Activated CD4-positive, alpha-beta T cell treated with anti-CD3 and anti-CD28 coated beads for 36 hours (primary cell): ENCODE measurements at regions of chr17 and their contacts with region 1.

Region 1: GRCh38 chr17:7989781-7990655 is 12.4 kb upstream of the GUCY2D start:
- DNase-seq: peak; percentile 96
- ATAC-seq: peak; percentile 93
- H3K4me3 Mint-ChIP-seq: peak overlapping the region; percentile 73
- H3K27ac Mint-ChIP-seq: peak overlapping the region; percentile 87
- H3K4me1 Mint-ChIP-seq: peaks cover 14% of the 10 kb centered on the region
- H3K27me3 Mint-ChIP-seq: peaks cover 5% of the 10 kb centered on the region

Region 2: GRCh38 chr17:7323731-7324437 is 666.1 kb before region 1 on chr17:
- CTCF ChIA-PET with region 1: no interaction called
- POLR2A ChIA-PET with region 1: interaction called, 11 read pairs
- intact Hi-C with region 1: no loop called
- DNase-seq: peak; percentile 80
- ATAC-seq: peak; percentile 66
- H3K4me3 Mint-ChIP-seq: no peak overlapping the region
- H3K27ac Mint-ChIP-seq: no peak overlapping the region
- H3K4me1 Mint-ChIP-seq: peaks cover 18% of the 10 kb centered on the region
- H3K27me3 Mint-ChIP-seq: no peaks in the 10 kb centered on the region

Region 3: GRCh38 chr17:7825206-7825990 is 164.6 kb before region 1 on chr17:
- CTCF ChIA-PET with region 1: interaction called, 16 read pairs
- POLR2A ChIA-PET with region 1: no interaction called
- intact Hi-C with region 1: loop called (anchors 1 to 2 kb)
- DNase-seq: no peak
- ATAC-seq: peak; percentile 72
- H3K4me3 Mint-ChIP-seq: no peak overlapping the region
- H3K27ac Mint-ChIP-seq: no peak overlapping the region
- H3K4me1 Mint-ChIP-seq: peaks cover 3% of the 10 kb centered on the region
- H3K27me3 Mint-ChIP-seq: no peaks in the 10 kb centered on the region

Region 4: DNA sequence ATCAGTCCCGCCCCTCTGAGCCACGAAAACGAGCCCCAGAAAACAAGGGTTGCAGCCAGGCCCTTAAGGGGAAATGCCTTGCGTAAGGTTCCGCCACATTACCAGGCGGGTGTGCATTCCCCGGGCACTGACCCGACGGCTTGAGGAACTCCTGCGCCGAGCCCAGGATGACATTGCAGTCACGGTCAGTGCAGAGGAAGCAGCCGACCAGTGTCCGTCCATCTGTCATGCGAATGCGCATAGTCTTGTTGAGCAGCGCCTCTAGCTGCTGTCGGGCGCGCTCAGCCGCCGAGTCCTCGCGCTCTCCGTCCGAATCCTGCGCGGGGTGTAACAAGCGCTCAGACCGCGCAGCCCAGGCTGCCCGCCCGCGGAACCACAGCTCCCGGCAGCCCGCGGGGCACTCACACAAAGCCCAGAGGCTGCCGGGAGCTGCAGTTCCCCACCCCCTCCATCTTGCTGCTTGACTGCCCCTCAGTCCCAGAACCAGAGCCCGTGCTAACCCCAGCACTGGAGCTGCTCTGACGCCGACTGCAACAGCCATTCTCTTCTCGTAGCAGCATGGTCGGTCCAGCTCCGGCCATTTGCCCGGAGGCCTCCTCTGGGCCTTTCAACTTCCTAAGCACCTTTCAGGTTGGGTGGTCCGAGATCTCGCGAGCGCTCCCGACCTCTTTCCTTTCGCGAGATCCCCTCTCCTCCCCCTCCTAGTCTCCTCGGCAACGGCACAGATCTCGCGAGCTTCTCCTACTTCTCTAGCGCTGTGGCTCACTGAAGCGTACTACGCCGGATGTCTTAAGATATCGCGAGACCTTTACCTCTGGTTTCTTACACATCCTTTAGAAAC is 132.9 kb before region 1 on chr17 and contains the start of gene NAA38:
- CTCF ChIA-PET with region 1: interaction called, 53 read pairs
- POLR2A ChIA-PET with region 1: no interaction called
- intact Hi-C with region 1: loop called (anchors 1 to 2 kb)
- DNase-seq: peak; percentile 97
- ATAC-seq: peak; percentile 91
- H3K4me3 Mint-ChIP-seq: no peak within 1 kb of the TSS
- H3K27ac Mint-ChIP-seq: no peak within 1 kb of the TSS
- H3K4me1 Mint-ChIP-seq: peaks cover 18% of the 10 kb centered on the region
- H3K27me3 Mint-ChIP-seq: no peaks in the 10 kb centered on the region
- total RNA-seq, gene NAA38: 64.7 to 79.8 TPM

Region 5: DNA sequence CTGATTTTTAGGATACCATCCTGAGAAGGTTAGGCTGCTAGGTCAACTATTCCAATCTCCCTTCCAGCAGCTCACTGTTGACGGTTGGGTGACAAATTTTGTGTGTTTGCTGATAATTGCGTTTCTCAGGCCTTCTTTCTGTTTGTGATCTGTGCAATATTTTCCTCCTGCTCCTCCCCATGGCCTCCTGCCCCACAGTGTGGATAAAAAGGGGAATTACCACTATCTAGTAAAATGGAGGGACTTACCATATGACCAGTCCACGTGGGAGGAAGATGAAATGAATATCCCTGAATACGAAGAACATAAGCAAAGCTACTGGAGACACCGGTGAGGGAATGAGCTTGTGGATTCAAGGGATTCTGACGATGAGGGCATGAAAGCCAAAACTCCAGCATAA is 92.2 kb before region 1 on chr17:
- CTCF ChIA-PET with region 1: interaction called, 16 read pairs
- POLR2A ChIA-PET with region 1: no interaction called
- intact Hi-C with region 1: no loop called
- DNase-seq: peak; percentile 33
- ATAC-seq: peak; percentile 82
- H3K4me3 Mint-ChIP-seq: no peak overlapping the region
- H3K27ac Mint-ChIP-seq: peak overlapping the region; percentile 55
- H3K4me1 Mint-ChIP-seq: peaks cover 16% of the 10 kb centered on the region
- H3K27me3 Mint-ChIP-seq: no peaks in the 10 kb centered on the region

Region 6: GRCh38 chr17:7956228-7956965 is 33.6 kb before region 1 on chr17:
- CTCF ChIA-PET with region 1: interaction called, 14 read pairs
- POLR2A ChIA-PET with region 1: no interaction called
- intact Hi-C with region 1: no loop called
- DNase-seq: no peak
- ATAC-seq: no peak
- H3K4me3 Mint-ChIP-seq: no peak overlapping the region
- H3K27ac Mint-ChIP-seq: no peak overlapping the region
- H3K4me1 Mint-ChIP-seq: peaks cover 13% of the 10 kb centered on the region
- H3K27me3 Mint-ChIP-seq: peaks cover 2% of the 10 kb centered on the region

Region 7: DNA sequence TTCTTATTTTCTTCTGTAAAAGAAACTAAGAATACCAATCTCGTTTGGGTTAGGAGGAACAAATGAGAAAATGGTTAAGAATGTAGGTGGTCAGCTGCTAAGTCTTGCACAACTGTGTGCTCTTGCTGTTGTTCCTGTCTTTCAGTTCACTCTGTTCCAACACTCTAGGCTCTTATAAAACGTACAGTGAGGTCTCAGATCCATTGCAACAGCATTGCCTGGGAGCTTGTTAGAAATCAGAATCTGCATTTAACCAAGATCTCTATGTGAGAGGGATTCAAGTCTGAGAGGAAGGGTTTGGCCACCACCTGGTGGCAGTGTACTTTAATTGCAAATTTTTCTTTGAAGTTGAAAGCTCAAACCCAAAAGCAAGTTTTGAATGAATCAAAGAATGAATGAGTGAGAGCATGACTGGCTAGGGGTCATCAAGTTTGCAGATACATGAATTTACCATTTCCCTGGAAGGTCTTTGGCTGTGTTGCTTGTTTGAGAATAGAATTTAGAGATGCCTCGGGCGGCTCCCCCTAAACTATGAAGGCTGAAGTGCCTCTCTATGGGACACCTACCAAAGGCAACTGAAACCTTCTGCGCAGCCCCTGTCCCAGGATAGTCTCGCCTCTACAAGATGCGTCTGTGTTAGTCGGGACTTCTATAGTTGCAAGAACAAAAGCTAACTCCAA is 51.4 kb after region 1 on chr17:
- CTCF ChIA-PET with region 1: interaction called, 21 read pairs
- POLR2A ChIA-PET with region 1: no interaction called
- intact Hi-C with region 1: loop called in 1 of 2 experiments (anchors 5 kb)
- DNase-seq: peak; percentile 72
- ATAC-seq: peak; percentile 84
- H3K4me3 Mint-ChIP-seq: no peak overlapping the region
- H3K27ac Mint-ChIP-seq: no peak overlapping the region
- H3K4me1 Mint-ChIP-seq: no peaks in the 10 kb centered on the region
- H3K27me3 Mint-ChIP-seq: peaks cover 25% of the 10 kb centered on the region

Region 8: GRCh38 chr17:8798846-8799569 is 809.0 kb after region 1 on chr17 and contains the start of gene MFSD6L:
- CTCF ChIA-PET with region 1: no interaction called
- POLR2A ChIA-PET with region 1: no interaction called
- intact Hi-C with region 1: no loop called
- DNase-seq: peak; percentile 37
- ATAC-seq: peak; percentile 49
- H3K4me3 Mint-ChIP-seq: no peak within 1 kb of the TSS
- H3K27ac Mint-ChIP-seq: no peak within 1 kb of the TSS
- H3K4me1 Mint-ChIP-seq: no peaks in the 10 kb centered on the region
- H3K27me3 Mint-ChIP-seq: no peaks in the 10 kb centered on the region
- total RNA-seq, gene MFSD6L: 0.07 TPM